ENCODE measurements at regions of chr1 and their contacts with region 1.

Region 1: DNA sequence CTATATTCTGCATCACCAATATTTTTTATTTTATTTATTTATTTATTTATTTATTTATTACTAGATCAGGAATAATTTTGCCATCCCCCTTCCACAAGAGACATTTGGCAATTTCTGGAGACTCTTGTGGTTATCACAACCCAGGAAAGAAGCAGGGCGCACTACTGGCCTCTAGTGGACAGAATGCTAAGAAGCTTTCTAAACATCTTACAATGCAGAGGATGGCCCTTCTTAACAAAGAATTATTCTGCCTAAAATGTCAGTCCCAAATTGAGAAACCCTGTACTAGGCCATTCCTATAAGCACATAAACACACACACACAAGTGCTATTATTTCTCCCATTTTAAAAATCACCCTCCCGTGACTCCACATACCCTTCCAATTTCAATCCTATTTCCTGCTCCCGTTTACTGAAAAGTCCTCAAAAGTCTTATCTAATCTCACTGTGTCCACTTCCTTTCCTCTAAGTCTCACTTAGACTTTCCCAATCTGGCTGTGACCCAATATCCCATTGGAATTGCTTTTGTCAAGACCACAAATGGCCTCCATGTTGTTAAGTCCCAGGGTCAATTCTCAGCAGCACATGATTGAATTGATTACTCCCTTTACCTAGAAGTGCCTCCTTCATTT is 43.7 kb upstream of the RNF11 start:
- DNase-seq: peak; percentile 43 to 70
- ATAC-seq: peak in 3 of 4 donors; percentile 57 to 80 (median 63)
- H3K4me3 ChIP-seq: no peak overlapping the region
- H3K27ac ChIP-seq: no peak overlapping the region
- H3K4me1 ChIP-seq: no peaks in the 10 kb centered on the region
- H3K27me3 ChIP-seq: no peaks in the 10 kb centered on the region
- CTCF ChIP-seq: peak; percentile 80

Region 2: DNA sequence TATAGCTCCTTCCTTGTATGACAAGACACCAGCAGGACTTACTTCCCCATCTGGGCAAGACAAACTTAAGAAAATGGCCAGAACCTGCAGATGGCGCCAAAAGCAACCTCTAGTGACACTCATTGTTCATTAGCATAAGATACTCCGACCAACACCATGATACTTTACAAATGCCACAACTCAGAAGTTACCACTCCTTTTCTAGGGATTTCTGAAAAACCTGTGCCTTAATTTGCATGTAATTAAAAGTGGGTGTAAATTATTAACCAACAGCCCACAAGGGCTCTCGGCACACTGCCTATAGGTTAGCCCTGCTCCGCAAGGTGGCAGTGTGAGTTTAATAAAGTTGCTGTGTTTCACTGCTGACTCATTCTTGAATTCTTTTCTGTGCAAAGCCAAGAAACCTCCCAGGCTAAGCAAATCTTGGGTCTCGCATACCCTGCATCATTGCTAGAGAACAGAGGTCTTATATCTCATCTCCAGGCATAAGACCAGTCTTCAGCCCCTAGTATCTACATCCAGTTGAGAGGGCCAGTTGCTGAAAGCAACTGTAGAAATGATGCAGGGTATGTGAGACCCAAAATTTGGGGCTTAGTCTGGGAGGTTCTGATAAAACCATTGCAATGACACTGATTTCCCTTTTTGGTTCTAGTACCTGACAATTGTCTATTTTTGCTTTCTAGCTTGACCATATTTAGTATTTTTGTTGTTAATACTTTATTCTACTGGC is 318.7 kb before region 1 on chr1:
- intact Hi-C with region 1: no loop called
- DNase-seq: peak in 1 of 2 donors; percentile 35
- ATAC-seq: peak in 3 of 4 donors; percentile 51 to 52 (median 52)
- H3K4me3 ChIP-seq: no peak overlapping the region
- H3K27ac ChIP-seq: no peak overlapping the region
- H3K4me1 ChIP-seq: peaks cover 6% of the 10 kb centered on the region
- H3K27me3 ChIP-seq: no peaks in the 10 kb centered on the region
- CTCF ChIP-seq: peak; percentile 40

Region 3: GRCh38 chr1:50929376-50929958 is 262.9 kb before region 1 on chr1:
- intact Hi-C with region 1: loop called in 1 of 2 experiments (anchors 2 kb)
- DNase-seq: no peak
- ATAC-seq: peak in 1 of 4 donors; percentile 52
- H3K4me3 ChIP-seq: no peak overlapping the region
- H3K27ac ChIP-seq: no peak overlapping the region
- H3K4me1 ChIP-seq: no peaks in the 10 kb centered on the region
- H3K27me3 ChIP-seq: no peaks in the 10 kb centered on the region
- CTCF ChIP-seq: peak; percentile 59

Region 4: DNA sequence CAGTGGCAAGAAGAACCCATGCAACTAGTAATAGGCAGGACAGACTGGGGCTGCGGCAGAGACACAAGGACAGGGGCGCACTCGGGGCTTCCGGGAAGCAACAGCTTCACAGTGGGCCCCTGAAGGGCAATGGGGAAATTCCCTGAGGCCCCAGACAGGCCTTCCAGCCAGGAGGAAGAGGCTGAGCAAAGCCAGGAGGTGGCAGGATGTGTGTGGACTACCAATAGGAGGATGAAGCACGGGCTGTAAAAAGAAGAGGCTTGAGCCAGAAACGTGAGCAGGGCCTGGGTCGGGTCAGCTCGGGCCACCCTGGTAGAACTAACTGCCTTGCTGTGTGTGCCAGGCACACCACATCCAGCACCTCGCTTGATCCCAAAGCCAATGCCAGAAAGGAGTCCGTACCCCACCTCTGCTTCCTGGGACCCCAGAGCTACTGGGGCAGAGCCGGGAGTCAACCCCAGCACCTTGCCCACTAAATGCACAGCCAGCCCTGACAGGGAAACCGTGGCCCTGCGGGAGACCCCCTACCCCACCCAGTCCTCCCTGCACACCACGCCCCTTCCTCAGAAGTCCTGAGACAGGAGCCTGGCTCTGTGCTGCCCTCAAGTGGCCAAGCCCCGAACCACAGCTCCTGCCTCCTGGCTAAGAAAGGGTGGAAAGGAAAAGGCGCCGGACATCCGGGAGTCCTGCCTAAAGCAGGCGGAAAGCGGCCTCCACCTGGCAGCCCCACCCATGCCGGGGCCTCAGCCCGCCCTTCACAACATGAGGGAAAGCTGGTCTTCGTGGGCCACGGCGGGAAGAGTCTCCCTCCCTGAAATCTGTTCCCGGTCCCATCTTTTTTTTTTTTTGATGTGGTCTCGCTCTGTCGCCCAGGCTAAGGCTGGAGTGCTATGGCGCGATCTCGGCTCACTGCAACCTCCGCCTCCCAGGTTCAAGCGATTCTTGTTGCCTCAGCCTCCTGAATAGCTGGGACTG is 104.3 kb after region 1 on chr1:
- intact Hi-C with region 1: loop called in 1 of 2 experiments (anchors 2 kb)
- DNase-seq: peak; percentile 80 to 91
- ATAC-seq: peak; percentile 80 to 93 (median 89)
- H3K4me3 ChIP-seq: peak overlapping the region; percentile 59
- H3K27ac ChIP-seq: no peak overlapping the region
- H3K4me1 ChIP-seq: no peaks in the 10 kb centered on the region
- H3K27me3 ChIP-seq: no peaks in the 10 kb centered on the region
- CTCF ChIP-seq: peak; percentile 93